ENCODE measurements at regions of chr2 and their contacts with region 1.

Region 1: GRCh38 chr2:104599787-104600510 is 254.0 kb upstream of the POU3F3 start:
- DNase-seq: peak; percentile 27
- H3K4me3 ChIP-seq: no peak overlapping the region
- H3K27ac ChIP-seq: peak overlapping the region; percentile 83
- H3K4me1 ChIP-seq: peaks cover 4% of the 10 kb centered on the region
- H3K27me3 ChIP-seq: no peaks in the 10 kb centered on the region
- CTCF ChIP-seq: no peak

Region 2: GRCh38 chr2:104702451-104702850 is 102.5 kb after region 1 on chr2:
- CTCF ChIA-PET with region 1: no interaction called
- dilution Hi-C with region 1: no loop called
- in situ Hi-C with region 1: no loop called
- intact Hi-C with region 1: loop called (anchors 10 kb)
- DNase-seq: no peak
- H3K4me3 ChIP-seq: no peak overlapping the region
- H3K27ac ChIP-seq: no peak overlapping the region
- H3K4me1 ChIP-seq: peaks cover 25% of the 10 kb centered on the region
- H3K27me3 ChIP-seq: no peaks in the 10 kb centered on the region
- CTCF ChIP-seq: no peak

Region 3: DNA sequence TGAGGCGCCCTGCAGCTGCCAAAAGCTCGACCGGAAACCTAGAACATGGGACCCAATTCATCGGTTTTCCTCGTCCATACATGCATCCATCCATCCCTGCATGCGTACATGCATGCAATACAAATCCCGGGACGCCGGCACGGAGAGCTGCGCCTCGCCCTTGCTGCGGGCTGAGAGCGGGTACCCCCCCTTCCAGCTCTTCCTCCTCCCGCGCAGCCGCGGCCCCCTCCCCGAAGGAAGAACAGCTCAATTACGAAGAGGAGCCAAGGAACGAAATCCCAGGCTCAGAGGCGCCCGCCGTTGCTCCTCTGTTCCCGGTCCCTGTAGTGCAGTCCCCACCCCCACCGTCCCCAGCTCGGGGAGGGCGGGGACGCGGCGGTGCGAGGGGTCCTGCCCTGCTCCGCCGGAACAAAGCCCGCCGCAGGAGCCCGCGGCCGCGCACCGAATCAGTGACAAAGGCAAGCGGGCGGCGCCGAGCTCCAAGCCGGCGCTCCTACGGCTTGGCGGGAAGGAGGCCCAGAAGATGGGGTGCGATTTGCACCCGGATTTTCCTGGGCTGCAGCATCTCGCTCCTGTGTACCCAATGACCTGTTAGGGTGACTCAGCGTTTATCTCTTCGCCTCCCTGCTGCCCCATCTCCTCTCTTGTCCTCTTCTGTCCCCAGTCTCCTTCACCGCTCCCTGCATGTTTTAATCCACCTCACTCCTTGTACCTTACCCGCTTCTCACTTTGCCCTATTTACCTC is 245.0 kb after region 1 on chr2:
- CTCF ChIA-PET with region 1: no interaction called
- dilution Hi-C with region 1: no loop called
- in situ Hi-C with region 1: no loop called
- intact Hi-C with region 1: no loop called
- DNase-seq: no peak
- H3K4me3 ChIP-seq: no peak overlapping the region
- H3K27ac ChIP-seq: no peak overlapping the region
- H3K4me1 ChIP-seq: no peaks in the 10 kb centered on the region
- H3K27me3 ChIP-seq: peaks cover 49% of the 10 kb centered on the region
- CTCF ChIP-seq: no peak

Measured in mammary epithelial cell (primary cell).